Common myeloid progenitor, CD34-positive (primary cell): ENCODE measurements at regions of chr6 and their contacts with region 1.

Region 1: GRCh38 chr6:46221222-46221793 is 50.5 kb upstream of the ENPP5 start:
- DNase-seq: peak; percentile 50 to 76 (median 72)
- H3K4me3 ChIP-seq: no peak overlapping the region
- H3K27ac ChIP-seq: no peak overlapping the region
- H3K4me1 ChIP-seq: peaks cover 10 to 27% (median 22%) of the 10 kb centered on the region in 4 experiments
- H3K27me3 ChIP-seq: no peaks in the 10 kb centered on the region

Region 2: DNA sequence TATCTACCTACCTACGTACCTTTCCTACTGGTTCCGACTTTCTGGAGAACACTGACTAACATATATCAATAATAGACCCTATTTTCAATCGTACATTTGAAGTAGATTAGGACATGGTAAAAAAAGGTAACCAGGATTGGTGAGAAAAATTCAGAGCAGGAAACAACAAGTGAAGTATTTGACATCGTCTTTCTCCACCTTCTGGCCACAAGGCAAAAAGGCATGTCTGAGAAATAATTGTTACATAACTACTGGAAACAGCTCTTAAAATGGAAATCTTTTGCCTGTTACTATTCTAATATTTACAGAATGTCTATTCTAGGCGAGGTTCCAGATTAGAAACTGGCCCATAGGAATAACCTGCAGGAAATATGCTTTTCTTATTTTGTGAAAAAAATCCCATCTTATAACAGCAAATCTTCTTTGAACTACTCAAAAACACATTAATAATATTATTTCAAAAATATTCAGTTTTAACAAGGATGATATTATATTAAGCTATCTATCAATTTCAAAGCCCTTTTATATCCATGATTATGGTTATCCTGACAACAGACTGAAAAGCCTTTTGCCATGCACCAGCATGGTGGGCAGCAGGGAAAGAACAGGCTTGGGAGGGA is 189.1 kb after region 1 on chr6:
- CTCF ChIA-PET with region 1: interaction called, 228 read pairs
- POLR2A ChIA-PET with region 1: no interaction called
- DNase-seq: peak; percentile 54 to 80 (median 77)
- H3K4me3 ChIP-seq: no peak overlapping the region
- H3K27ac ChIP-seq: no peak overlapping the region
- H3K4me1 ChIP-seq: no peaks in the 10 kb centered on the region
- H3K27me3 ChIP-seq: no peaks in the 10 kb centered on the region